ENCODE measurements at regions of chr11 and their contacts with region 1.

Region 1: DNA sequence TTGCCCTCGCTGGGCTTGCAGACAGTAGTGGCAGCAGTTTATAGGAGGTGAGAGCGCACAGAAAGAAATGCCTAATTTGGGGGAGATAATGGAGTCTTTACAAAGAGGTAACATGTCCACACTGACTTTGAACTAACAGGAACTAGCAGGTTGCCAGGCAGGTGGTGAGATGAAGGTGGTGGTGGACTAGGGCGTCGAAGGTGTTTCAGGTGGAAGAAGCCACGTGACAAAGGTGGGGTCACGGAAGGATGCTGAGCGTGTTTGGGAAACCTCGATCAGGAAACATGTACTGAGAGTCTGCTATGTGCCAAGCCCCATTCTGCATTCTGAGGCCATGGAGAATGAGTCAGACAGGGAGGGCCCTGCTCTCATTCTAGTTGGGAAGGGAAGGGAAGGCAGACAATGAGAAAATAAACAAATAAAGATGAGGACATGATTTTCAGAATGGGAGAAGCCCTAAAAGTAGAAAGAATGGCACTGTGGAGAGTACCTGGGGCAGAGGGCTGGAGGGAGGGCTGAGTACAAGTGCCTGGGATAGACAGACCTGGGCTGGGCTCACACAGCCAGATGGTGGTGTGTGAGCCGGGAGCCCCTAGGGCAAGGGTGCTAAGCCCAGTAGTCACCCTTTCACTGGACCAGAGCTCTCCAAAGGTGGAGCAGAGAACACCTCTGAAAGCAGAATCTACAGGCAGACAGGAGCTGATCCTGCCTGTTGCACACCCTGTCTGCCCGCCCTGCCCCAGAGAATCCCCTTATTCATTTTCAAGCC is 16.2 kb upstream of the NNMT start:
- DNase-seq: no peak
- H3K4me3 ChIP-seq: no peak overlapping the region
- H3K27ac ChIP-seq: peak overlapping the region in 4 of 8 donors; percentile 16 to 76 (median 70)
- H3K4me1 ChIP-seq: peaks cover 0 to 34% (median 8%) of the 10 kb centered on the region in 6 donors
- H3K27me3 ChIP-seq: peaks cover 0 to 19% (median 0%) of the 10 kb centered on the region in 7 donors
- CTCF ChIP-seq: no peak
- POLR2A ChIP-seq: no peak

Region 2: GRCh38 chr11:114483929-114484328 is 204.0 kb after region 1 on chr11:
- intact Hi-C with region 1: no loop called
- DNase-seq: no peak
- H3K4me3 ChIP-seq: no peak overlapping the region
- H3K27ac ChIP-seq: no peak overlapping the region
- H3K4me1 ChIP-seq: peaks cover 0 to 7% (median 0%) of the 10 kb centered on the region in 6 donors
- H3K27me3 ChIP-seq: no peaks in the 10 kb centered on the region
- CTCF ChIP-seq: no peak
- POLR2A ChIP-seq: no peak

Region 3: GRCh38 chr11:114564831-114565230 is 284.9 kb after region 1 on chr11:
- intact Hi-C with region 1: no loop called
- DNase-seq: no peak
- H3K4me3 ChIP-seq: no peak overlapping the region
- H3K27ac ChIP-seq: no peak overlapping the region
- H3K4me1 ChIP-seq: no peaks in the 10 kb centered on the region
- H3K27me3 ChIP-seq: no peaks in the 10 kb centered on the region
- CTCF ChIP-seq: no peak
- POLR2A ChIP-seq: no peak

Region 4: GRCh38 chr11:114606003-114606801 is 326.2 kb after region 1 on chr11:
- intact Hi-C with region 1: loop called (anchors 10 kb)
- DNase-seq: no peak
- H3K4me3 ChIP-seq: no peak overlapping the region
- H3K27ac ChIP-seq: no peak overlapping the region
- H3K4me1 ChIP-seq: no peaks in the 10 kb centered on the region
- H3K27me3 ChIP-seq: no peaks in the 10 kb centered on the region
- CTCF ChIP-seq: peak in 1 of 11 experiments; percentile 5
- POLR2A ChIP-seq: no peak

Measured in spleen (tissue), 13 donors.